ENCODE measurements at regions of chr1 and their contacts with region 1.

Region 1: DNA sequence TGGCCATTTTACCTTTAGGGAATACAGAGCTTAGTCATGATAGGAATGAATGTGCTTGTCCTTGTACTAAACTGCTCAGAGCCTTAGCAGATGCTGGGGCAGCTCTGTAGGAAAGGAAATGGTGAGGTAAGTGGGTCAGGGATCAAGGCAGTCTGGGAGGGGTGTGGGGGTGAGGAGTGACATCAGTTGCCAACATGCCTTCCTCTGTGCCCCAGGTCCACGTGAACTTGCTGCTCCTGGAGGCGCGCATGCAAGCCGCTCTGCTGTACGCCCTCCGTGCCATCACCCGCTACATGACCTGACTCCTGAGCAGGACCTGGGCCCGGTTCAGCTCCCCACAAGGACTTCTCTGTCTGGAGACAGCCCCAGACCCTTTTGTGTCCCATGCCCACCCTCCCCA is 21.2 kb downstream of the SESN2 start:
- DNase-seq: no peak
- ATAC-seq: peak in 1 of 4 experiments; percentile 48
- H3K4me3 ChIP-seq: no peak overlapping the region
- H3K4me3 Mint-ChIP-seq: no peak overlapping the region
- H3K27ac ChIP-seq: no peak overlapping the region
- H3K27ac Mint-ChIP-seq: no peak overlapping the region
- H3K4me1 ChIP-seq: peaks cover 0 to 3% of the 10 kb centered on the region in 2 experiments
- H3K4me1 Mint-ChIP-seq: peaks cover 0 to 7% (median 4%) of the 10 kb centered on the region in 3 donors
- H3K27me3 ChIP-seq: no peaks in the 10 kb centered on the region
- H3K27me3 Mint-ChIP-seq: no peaks in the 10 kb centered on the region

Region 2: DNA sequence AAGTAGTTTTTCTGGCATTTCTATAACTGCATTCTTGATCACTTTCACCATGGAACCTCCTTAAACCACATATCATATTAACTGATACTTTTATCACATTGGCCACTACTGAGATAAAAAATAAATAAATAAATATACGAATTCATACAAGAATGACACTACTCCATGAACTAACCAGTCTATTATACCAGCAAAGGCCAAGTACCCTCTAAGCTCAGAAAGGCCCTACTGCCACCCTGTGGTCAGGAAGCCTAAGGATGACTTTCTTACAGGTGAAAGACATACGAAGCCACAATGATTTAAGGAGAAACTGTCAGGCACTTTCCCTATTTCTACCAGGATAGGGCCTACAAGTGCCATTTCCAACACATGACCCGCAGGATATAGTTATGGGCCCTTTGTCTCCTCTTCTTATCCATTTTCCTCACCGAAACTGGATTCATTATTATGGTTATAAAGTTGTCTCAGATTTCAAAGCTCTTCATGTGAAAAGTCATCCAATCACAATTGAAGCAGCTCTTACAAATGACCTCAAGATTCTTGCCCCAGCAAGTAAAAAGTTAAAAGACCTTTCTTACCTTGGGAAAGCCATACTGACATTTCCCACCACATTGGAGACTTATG is 71.6 kb before region 1 on chr1:
- CTCF ChIA-PET with region 1: no interaction called
- POLR2A ChIA-PET with region 1: no interaction called
- DNase-seq: peak in 34 of 35 experiments; percentile 9 to 77 (median 56)
- ATAC-seq: peak; percentile 58 to 84 (median 73)
- H3K4me3 ChIP-seq: no peak overlapping the region
- H3K4me3 Mint-ChIP-seq: no peak overlapping the region
- H3K27ac ChIP-seq: no peak overlapping the region
- H3K27ac Mint-ChIP-seq: no peak overlapping the region
- H3K4me1 ChIP-seq: no peaks in the 10 kb centered on the region
- H3K4me1 Mint-ChIP-seq: peaks cover 0 to 6% (median 3%) of the 10 kb centered on the region in 3 donors
- H3K27me3 ChIP-seq: no peaks in the 10 kb centered on the region
- H3K27me3 Mint-ChIP-seq: no peaks in the 10 kb centered on the region

Region 3: GRCh38 chr1:28480308-28480707 is 199.8 kb after region 1 on chr1:
- CTCF ChIA-PET with region 1: no interaction called
- POLR2A ChIA-PET with region 1: interaction called in 1 of 2 experiments, 11 read pairs
- DNase-seq: no peak
- ATAC-seq: no peak
- H3K4me3 ChIP-seq: no peak overlapping the region
- H3K4me3 Mint-ChIP-seq: no peak overlapping the region
- H3K27ac ChIP-seq: no peak overlapping the region
- H3K27ac Mint-ChIP-seq: no peak overlapping the region
- H3K4me1 ChIP-seq: no peaks in the 10 kb centered on the region
- H3K4me1 Mint-ChIP-seq: no peaks in the 10 kb centered on the region
- H3K27me3 ChIP-seq: no peaks in the 10 kb centered on the region
- H3K27me3 Mint-ChIP-seq: no peaks in the 10 kb centered on the region